WTC11 (cell line): ENCODE measurements at regions of chr15 and their contacts with region 1.

Region 1: GRCh38 chr15:78131295-78132061 is at the start of gene CIB2:
- DNase-seq: peak; percentile 82
- ATAC-seq: peak; percentile 85
- H3K4me3 Mint-ChIP-seq: peak within 1 kb of the TSS; percentile 84
- H3K27ac Mint-ChIP-seq: peak within 1 kb of the TSS; percentile 88
- H3K4me1 Mint-ChIP-seq: peaks cover 32% of the 10 kb centered on the region
- H3K27me3 Mint-ChIP-seq: no peaks in the 10 kb centered on the region
- CTCF ChIP-seq: peak; percentile 35; the same call in 1 of the 2 replicates
- total RNA-seq, gene CIB2: 45.2 to 56.4 TPM (median 56.2 TPM) in 3 replicates

Region 2: DNA sequence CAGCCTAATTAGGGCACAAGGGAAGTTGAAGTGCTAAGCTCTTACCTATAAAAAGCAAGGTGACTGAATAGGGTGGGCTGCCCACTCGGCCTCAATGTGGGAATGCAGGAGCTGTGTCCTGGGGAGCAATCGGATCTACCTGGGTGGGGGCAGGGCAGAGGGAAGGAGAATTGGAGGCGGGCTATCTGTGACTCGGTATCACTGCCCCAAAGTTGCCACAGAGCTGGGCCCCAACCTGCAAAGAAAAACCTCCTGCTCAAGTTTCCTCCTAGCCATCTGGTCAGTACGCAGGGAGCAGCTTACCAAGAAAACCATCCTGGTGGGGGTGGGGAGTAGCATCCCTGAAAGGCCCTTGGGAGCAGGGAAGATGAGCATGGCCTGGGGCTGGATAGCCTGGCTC is 11.0 kb before region 1 on chr15:
- CTCF ChIA-PET with region 1: interaction called, 14 read pairs
- POLR2A ChIA-PET with region 1: interaction called, 10 read pairs
- DNase-seq: peak; percentile 33
- ATAC-seq: peak; percentile 81
- H3K4me3 Mint-ChIP-seq: 0 out of 2 replicates have a peak overlapping the region, but pooled peaks have one; percentile 24
- H3K27ac Mint-ChIP-seq: peak overlapping the region; percentile 77
- H3K4me1 Mint-ChIP-seq: peaks cover 21% of the 10 kb centered on the region
- H3K27me3 Mint-ChIP-seq: no peaks in the 10 kb centered on the region
- CTCF ChIP-seq: no peak

Region 3: GRCh38 chr15:78149068-78149804 is 17.8 kb after region 1 on chr15 and contains the start of gene IDH3A:
- CTCF ChIA-PET with region 1: interaction called, 24 read pairs
- POLR2A ChIA-PET with region 1: interaction called, 12 read pairs
- DNase-seq: peak; percentile 99
- ATAC-seq: peak; percentile 97
- H3K4me3 Mint-ChIP-seq: peak within 1 kb of the TSS; percentile 98
- H3K27ac Mint-ChIP-seq: peak within 1 kb of the TSS; percentile 94
- H3K4me1 Mint-ChIP-seq: peaks cover 23% of the 10 kb centered on the region
- H3K27me3 Mint-ChIP-seq: peaks cover 4% of the 10 kb centered on the region; the same call in 1 of the 2 replicates
- CTCF ChIP-seq: no peak
- total RNA-seq, gene IDH3A: 37.8 to 56.6 TPM (median 38.5 TPM) in 3 replicates

Region 4: GRCh38 chr15:78164010-78164409 is 32.5 kb after region 1 on chr15:
- CTCF ChIA-PET with region 1: no interaction called
- POLR2A ChIA-PET with region 1: no interaction called
- DNase-seq: no peak
- ATAC-seq: no peak
- H3K4me3 Mint-ChIP-seq: no peak overlapping the region
- H3K27ac Mint-ChIP-seq: no peak overlapping the region
- H3K4me1 Mint-ChIP-seq: no peaks in the 10 kb centered on the region
- H3K27me3 Mint-ChIP-seq: no peaks in the 10 kb centered on the region
- CTCF ChIP-seq: no peak

Region 5: GRCh38 chr15:78284758-78285157 is 153.3 kb after region 1 on chr15:
- CTCF ChIA-PET with region 1: no interaction called
- POLR2A ChIA-PET with region 1: no interaction called
- DNase-seq: no peak
- ATAC-seq: peak; percentile 57
- H3K4me3 Mint-ChIP-seq: no peak overlapping the region
- H3K27ac Mint-ChIP-seq: no peak overlapping the region
- H3K4me1 Mint-ChIP-seq: no peaks in the 10 kb centered on the region
- H3K27me3 Mint-ChIP-seq: no peaks in the 10 kb centered on the region
- CTCF ChIP-seq: no peak

Region 6: DNA sequence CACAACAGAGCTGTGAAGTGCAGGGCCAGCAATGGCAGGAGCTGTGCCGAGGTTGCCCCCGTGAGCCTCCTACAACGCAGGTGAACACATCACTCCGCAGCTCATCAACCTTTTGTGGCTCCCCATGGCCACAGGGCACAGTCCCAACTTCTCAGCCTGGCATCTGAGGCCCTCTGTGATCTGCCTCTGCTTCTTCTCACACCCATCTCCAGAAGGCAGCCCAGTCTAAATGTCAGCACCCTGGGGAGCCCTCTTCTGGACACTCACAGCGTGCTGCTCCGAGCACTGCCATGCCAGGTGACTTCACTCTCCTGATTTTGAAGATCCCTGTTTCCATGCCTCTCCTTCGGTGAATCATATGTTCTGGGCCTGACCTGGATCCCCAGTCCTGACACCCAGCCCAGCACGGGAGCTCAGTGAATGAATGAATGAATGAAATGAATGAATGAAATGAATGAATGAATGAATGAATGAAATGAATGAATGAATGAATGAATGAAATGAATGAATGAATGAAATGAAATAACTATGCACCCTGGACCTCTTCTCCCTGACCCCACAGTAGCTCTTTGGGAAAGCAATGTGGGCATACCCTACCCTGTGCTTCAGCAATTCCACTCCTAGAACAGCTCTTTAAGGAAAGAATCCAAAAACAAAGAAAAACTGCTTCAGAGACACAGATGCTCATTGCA is 185.8 kb after region 1 on chr15:
- CTCF ChIA-PET with region 1: no interaction called
- POLR2A ChIA-PET with region 1: no interaction called
- DNase-seq: no peak
- ATAC-seq: no peak
- H3K4me3 Mint-ChIP-seq: no peak overlapping the region
- H3K27ac Mint-ChIP-seq: no peak overlapping the region; the same call in 1 of the 2 replicates
- H3K4me1 Mint-ChIP-seq: peaks cover 49% of the 10 kb centered on the region
- H3K27me3 Mint-ChIP-seq: no peaks in the 10 kb centered on the region
- CTCF ChIP-seq: no peak